IMR-90 (cell line): ENCODE measurements at regions of chr4 and their contacts with region 1.

Region 1: DNA sequence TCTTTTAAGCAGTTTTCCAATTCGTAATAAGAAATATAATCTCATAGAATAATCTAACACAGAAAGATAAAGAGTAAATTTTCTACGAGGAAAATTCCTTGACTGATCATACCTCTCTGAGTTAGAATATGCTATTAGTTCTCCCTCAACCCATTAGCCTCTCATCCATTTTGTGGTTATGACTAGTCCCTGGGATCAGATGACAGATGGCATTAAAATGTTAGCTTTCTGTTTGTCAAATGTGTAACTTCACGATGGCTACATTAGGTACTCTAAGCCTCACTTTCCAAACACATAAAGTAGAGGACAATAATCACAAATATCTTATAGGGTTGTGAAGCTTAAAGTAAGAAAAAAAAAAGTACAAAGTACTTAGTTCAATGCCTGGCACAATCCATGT is 112.2 kb downstream of the ZAR1 start:
- DNase-seq: peak; percentile 75
- ATAC-seq: peak; percentile 63
- H3K4me3 ChIP-seq: no peak overlapping the region
- H3K27ac ChIP-seq: no peak overlapping the region
- H3K4me1 ChIP-seq: peaks cover 1% of the 10 kb centered on the region; the same call in 1 of the 2 replicates
- H3K27me3 ChIP-seq: no peaks in the 10 kb centered on the region
- CTCF ChIP-seq: no peak
- POLR2A ChIP-seq: no peak
- RAD21 ChIP-seq: no peak

Region 2: DNA sequence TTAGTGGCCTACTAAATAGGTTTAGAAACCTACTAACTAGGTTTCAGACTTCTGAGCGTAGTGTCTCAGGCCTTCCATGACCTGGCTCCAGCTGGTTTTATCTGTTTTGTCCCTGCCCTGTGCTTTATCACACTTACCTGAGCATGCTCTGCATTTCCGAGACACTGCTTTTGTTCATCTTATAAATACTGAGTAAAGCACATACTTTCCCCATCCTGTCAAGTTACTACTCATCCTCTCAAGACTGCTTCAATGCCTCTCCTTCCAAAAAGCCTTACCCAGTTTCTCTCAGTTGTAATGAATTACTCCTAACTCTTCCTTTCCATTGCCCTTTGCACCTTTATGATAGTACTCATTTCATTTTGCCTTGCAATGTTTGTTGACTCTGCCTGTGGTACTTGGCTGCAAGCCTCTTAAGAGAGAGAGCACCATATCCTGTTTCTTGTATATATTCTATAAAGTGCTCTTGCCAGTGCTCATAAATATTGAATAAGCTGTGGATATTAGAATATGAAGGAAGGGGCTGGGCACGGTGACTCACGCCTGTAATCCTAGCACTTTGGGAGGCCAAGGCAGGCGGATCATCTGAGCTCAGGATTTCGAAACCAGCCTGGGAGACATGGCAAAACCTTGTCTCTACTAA is 226.4 kb before region 1 on chr4:
- CTCF ChIA-PET with region 1: no interaction called
- POLR2A ChIA-PET with region 1: no interaction called
- dilution Hi-C with region 1: no loop called
- in situ Hi-C with region 1: no loop called
- intact Hi-C with region 1: no loop called
- DNase-seq: peak; percentile 96
- ATAC-seq: peak; percentile 94
- H3K4me3 ChIP-seq: no peak overlapping the region
- H3K27ac ChIP-seq: peak overlapping the region; percentile 56; the same call in 1 of the 2 replicates
- H3K4me1 ChIP-seq: peaks cover 2% of the 10 kb centered on the region; the same call in 1 of the 2 replicates
- H3K27me3 ChIP-seq: no peaks in the 10 kb centered on the region
- CTCF ChIP-seq: no peak
- POLR2A ChIP-seq: no peak
- RAD21 ChIP-seq: no peak

Region 3: GRCh38 chr4:48554606-48555005 is 47.6 kb before region 1 on chr4:
- CTCF ChIA-PET with region 1: no interaction called
- POLR2A ChIA-PET with region 1: no interaction called
- dilution Hi-C with region 1: no loop called
- in situ Hi-C with region 1: no loop called
- intact Hi-C with region 1: loop called (anchors 5 kb)
- DNase-seq: no peak
- ATAC-seq: no peak
- H3K4me3 ChIP-seq: no peak overlapping the region
- H3K27ac ChIP-seq: no peak overlapping the region
- H3K4me1 ChIP-seq: no peaks in the 10 kb centered on the region
- H3K27me3 ChIP-seq: no peaks in the 10 kb centered on the region
- CTCF ChIP-seq: no peak
- POLR2A ChIP-seq: no peak
- RAD21 ChIP-seq: no peak